Mammary epithelial cell (primary cell): ENCODE measurements at regions of chr11 and their contacts with region 1.

Region 1: GRCh38 chr11:61587521-61588453 is 6.9 kb upstream of the SYT7 start:
- DNase-seq: no peak
- H3K4me3 ChIP-seq: peak overlapping the region; percentile 19 to 41 (median 35)
- H3K27ac ChIP-seq: no peak overlapping the region
- H3K4me1 ChIP-seq: peaks cover 31% of the 10 kb centered on the region
- H3K27me3 ChIP-seq: no peaks in the 10 kb centered on the region
- CTCF ChIP-seq: peak; percentile 8 to 44

Region 2: GRCh38 chr11:61315260-61315659 is 272.5 kb before region 1 on chr11:
- CTCF ChIA-PET with region 1: no interaction called
- dilution Hi-C with region 1: no loop called
- in situ Hi-C with region 1: no loop called
- intact Hi-C with region 1: no loop called
- DNase-seq: peak; percentile 42
- H3K4me3 ChIP-seq: no peak overlapping the region
- H3K27ac ChIP-seq: no peak overlapping the region
- H3K4me1 ChIP-seq: peaks cover 4% of the 10 kb centered on the region
- H3K27me3 ChIP-seq: no peaks in the 10 kb centered on the region
- CTCF ChIP-seq: no peak

Region 3: GRCh38 chr11:61357233-61357893 is 230.4 kb before region 1 on chr11:
- CTCF ChIA-PET with region 1: no interaction called
- dilution Hi-C with region 1: no loop called
- in situ Hi-C with region 1: no loop called
- intact Hi-C with region 1: no loop called
- DNase-seq: no peak
- H3K4me3 ChIP-seq: no peak overlapping the region
- H3K27ac ChIP-seq: no peak overlapping the region
- H3K4me1 ChIP-seq: peaks cover 6% of the 10 kb centered on the region
- H3K27me3 ChIP-seq: no peaks in the 10 kb centered on the region
- CTCF ChIP-seq: no peak

Region 4: GRCh38 chr11:61555051-61555969 is 32.5 kb before region 1 on chr11:
- CTCF ChIA-PET with region 1: no interaction called
- dilution Hi-C with region 1: loop called (anchors 5 kb)
- in situ Hi-C with region 1: no loop called
- intact Hi-C with region 1: no loop called
- DNase-seq: no peak
- H3K4me3 ChIP-seq: no peak overlapping the region
- H3K27ac ChIP-seq: no peak overlapping the region
- H3K4me1 ChIP-seq: peaks cover 14% of the 10 kb centered on the region
- H3K27me3 ChIP-seq: peaks cover 4% of the 10 kb centered on the region
- CTCF ChIP-seq: peak in 1 of 2 donors; percentile 8

Region 5: DNA sequence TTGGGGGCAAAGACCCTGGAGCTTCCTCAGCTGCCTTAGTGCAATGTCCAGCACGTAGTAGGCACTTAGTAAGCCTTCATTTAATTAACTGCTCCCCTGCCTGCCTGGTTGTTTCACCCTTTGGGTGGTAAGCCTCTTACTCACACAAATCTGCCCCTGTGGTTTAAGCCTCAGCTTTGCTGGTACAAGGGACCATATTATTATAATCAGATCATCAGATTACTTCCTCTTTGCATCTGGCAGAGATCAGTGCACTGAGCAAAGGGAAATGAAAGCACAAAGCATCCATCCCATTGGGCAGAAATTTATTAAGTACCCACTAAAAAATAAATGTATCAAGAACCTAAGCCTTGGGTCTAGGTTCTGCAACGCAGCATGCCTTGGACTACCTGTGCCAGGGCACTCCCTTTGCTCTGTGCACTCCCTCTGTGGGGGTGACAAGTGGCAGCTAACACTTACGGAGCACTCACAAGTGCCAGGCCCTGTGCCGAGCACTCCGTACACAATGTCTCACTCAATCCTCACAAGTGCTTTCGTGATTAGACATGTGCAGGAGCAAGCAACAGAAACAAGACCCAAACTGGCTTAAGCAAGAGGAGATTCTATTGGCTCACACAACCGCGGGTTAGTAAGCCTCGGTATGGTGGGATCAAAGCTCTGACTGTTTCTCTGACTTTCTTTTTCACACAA is 57.5 kb after region 1 on chr11:
- CTCF ChIA-PET with region 1: no interaction called
- dilution Hi-C with region 1: loop called (anchors 5 kb)
- in situ Hi-C with region 1: no loop called
- intact Hi-C with region 1: no loop called
- DNase-seq: no peak
- H3K4me3 ChIP-seq: no peak overlapping the region
- H3K27ac ChIP-seq: no peak overlapping the region
- H3K4me1 ChIP-seq: no peaks in the 10 kb centered on the region
- H3K27me3 ChIP-seq: no peaks in the 10 kb centered on the region
- CTCF ChIP-seq: no peak